Endothelial cell of umbilical vein (primary cell): ENCODE measurements at regions of chr12 and their contacts with region 1.

Region 1: GRCh38 chr12:49644620-49644994 is 21.2 kb downstream of the PRPF40B start:
- DNase-seq: peak; percentile 69
- H3K4me3 ChIP-seq: no peak overlapping the region
- H3K27ac ChIP-seq: peak overlapping the region; percentile 26
- H3K4me1 ChIP-seq: peaks cover 31% of the 10 kb centered on the region
- H3K27me3 ChIP-seq: no peaks in the 10 kb centered on the region
- CTCF ChIP-seq: peak; percentile 91 to 92
- POLR2A ChIP-seq: no peak

Region 2: DNA sequence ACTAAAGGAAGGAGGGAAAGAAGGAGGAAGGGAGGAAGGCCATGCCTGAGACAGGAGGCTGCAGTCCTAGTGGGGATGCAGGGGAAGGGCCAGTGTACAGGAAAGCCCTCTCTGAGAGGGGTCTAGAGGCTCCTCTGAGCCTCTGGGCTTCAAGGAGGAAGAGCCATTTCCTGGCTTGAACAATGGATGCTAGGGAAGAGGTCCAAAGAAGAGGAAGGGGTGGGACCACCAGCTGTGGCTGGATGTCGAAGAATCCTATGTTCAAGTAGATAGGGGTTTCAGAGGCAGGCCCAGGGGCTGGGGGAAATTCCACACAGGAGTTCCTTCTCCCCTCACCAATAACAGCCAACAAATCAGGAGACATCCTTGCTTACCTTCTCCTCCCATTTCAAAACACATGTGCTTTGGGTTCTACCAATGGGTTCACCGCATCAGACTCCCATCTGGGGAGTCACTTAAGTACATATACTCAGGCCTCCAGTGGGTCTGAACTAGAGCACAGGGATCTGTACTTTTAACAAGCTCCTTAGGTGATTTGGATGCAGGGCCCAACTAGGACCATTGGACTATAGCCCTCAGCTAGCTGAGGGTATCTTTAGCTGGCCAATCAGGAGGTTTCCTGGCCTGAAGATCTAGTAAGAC is 11.1 kb after region 1 on chr12:
- CTCF ChIA-PET with region 1: interaction called, 11 read pairs
- POLR2A ChIA-PET with region 1: no interaction called
- dilution Hi-C with region 1: no loop called
- intact Hi-C with region 1: loop called (anchors 1 kb)
- DNase-seq: peak; percentile 84
- H3K4me3 ChIP-seq: no peak overlapping the region
- H3K27ac ChIP-seq: peak overlapping the region; percentile 82
- H3K4me1 ChIP-seq: peaks cover 21% of the 10 kb centered on the region
- H3K27me3 ChIP-seq: no peaks in the 10 kb centered on the region
- CTCF ChIP-seq: no peak
- POLR2A ChIP-seq: no peak

Region 3: DNA sequence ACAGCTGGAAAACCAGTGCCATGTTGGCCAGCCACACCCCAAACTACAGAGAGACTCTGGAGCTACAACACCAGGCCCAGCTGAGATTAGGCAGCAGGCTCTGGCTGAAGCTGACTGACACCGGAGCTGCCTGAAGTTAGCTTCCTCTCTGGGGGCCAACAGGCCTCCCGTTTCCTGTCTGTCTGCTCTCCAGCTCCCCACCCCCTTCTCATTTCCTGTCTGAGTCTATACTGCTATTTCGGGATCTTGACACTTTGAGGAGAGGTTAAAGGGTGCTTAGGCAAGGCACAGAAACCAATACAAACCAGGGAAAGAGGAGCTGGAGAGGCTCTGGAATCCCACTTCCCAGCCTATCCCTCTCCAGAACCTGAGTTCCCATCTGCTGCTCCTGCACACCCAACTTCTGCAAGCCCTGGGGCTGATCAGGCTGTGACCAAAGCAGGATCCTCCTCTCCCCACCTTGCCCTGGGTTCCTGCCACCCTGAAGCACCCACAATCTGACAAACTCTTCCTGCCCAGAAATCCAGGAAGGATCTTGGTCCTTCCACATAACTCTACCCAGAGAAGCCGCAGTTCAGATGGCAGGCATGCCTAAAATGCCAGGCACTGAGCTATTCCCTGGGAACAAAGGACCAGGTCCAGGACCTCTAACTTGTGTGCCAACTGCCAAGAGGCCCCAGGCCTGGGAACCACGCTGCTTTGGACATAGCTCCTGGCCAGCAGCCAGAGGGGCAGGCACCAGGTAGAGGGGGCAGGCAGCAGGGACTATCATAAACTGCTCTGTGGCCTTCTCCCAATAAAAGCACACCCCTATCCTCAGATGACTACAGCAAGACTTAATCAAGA is 18.6 kb after region 1 on chr12:
- CTCF ChIA-PET with region 1: interaction called, 32 read pairs
- POLR2A ChIA-PET with region 1: interaction called, 5 read pairs
- dilution Hi-C with region 1: no loop called
- intact Hi-C with region 1: loop called (anchors 1 kb)
- DNase-seq: peak; percentile 95
- H3K4me3 ChIP-seq: peak overlapping the region in 1 of 3 experiments; percentile 12
- H3K27ac ChIP-seq: peak overlapping the region; percentile 100
- H3K4me1 ChIP-seq: peaks cover 48% of the 10 kb centered on the region
- H3K27me3 ChIP-seq: no peaks in the 10 kb centered on the region
- CTCF ChIP-seq: no peak
- POLR2A ChIP-seq: no peak

Region 4: DNA sequence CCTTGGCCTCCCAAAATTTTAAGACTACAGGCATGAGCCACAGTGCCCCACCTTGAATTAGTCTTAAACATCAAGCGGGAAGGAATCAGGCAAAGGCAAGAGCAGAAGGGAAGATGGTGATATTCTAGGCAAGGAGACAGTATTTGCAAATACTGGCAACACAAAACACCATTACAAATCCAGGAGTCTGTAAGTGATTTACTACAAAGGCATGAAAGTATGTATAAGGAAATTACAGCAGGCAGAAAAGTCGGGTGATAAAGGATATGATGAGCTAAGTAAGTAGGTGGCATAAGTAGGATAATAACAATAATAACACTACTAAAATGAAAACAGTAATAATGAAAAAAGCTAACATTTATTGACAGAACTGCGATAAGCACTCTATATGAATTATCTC is 34.1 kb after region 1 on chr12:
- CTCF ChIA-PET with region 1: interaction called, 32 read pairs
- POLR2A ChIA-PET with region 1: interaction called, 10 read pairs
- dilution Hi-C with region 1: no loop called
- intact Hi-C with region 1: loop called (anchors 1 kb)
- DNase-seq: no peak
- H3K4me3 ChIP-seq: no peak overlapping the region
- H3K27ac ChIP-seq: no peak overlapping the region
- H3K4me1 ChIP-seq: peaks cover 14% of the 10 kb centered on the region
- H3K27me3 ChIP-seq: no peaks in the 10 kb centered on the region
- CTCF ChIP-seq: no peak
- POLR2A ChIP-seq: no peak

Region 5: GRCh38 chr12:49763006-49763591 is 118.5 kb after region 1 on chr12:
- CTCF ChIA-PET with region 1: interaction called, 6 read pairs
- POLR2A ChIA-PET with region 1: no interaction called
- dilution Hi-C with region 1: no loop called
- intact Hi-C with region 1: loop called (anchors 2 kb)
- DNase-seq: peak; percentile 75
- H3K4me3 ChIP-seq: no peak overlapping the region
- H3K27ac ChIP-seq: peak overlapping the region; percentile 22
- H3K4me1 ChIP-seq: peaks cover 19% of the 10 kb centered on the region
- H3K27me3 ChIP-seq: no peaks in the 10 kb centered on the region
- CTCF ChIP-seq: peak; percentile 86 to 92
- POLR2A ChIP-seq: no peak